ENCODE measurements at regions of chr6 and their contacts with region 1.

Region 1: GRCh38 chr6:118283766-118284165 is 264.3 kb upstream of the PLN start:
- DNase-seq: no peak
- H3K4me3 ChIP-seq: no peak overlapping the region
- H3K27ac ChIP-seq: no peak overlapping the region
- H3K4me1 ChIP-seq: peaks cover 0 to 7% (median 0%) of the 10 kb centered on the region in 3 donors
- H3K27me3 ChIP-seq: no peaks in the 10 kb centered on the region
- CTCF ChIP-seq: peak; percentile 25 to 56 (median 42)
- POLR2A ChIP-seq: no peak

Region 2: DNA sequence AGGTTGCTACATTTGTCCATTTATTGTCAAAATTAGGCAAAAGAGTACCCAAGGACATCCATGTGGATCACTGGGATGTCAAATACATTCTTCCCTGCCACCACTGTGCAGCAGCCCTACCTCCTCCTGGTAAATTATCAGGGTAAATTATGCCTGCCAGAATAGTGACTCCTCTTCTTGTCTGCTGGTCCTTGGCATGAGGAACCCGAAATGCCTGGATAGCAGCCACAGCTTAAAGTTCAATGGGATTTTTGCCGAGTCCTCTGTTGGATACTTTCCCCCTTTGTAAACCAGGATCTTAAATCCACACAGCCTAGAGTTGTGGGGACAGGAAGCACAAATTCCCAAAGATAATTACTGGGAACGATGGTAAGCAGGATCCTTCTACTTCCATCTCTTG is 1233.5 kb before region 1 on chr6:
- intact Hi-C with region 1: no loop called
- DNase-seq: no peak
- H3K4me3 ChIP-seq: no peak overlapping the region
- H3K27ac ChIP-seq: no peak overlapping the region
- H3K4me1 ChIP-seq: no peaks in the 10 kb centered on the region
- H3K27me3 ChIP-seq: no peaks in the 10 kb centered on the region
- CTCF ChIP-seq: no peak
- POLR2A ChIP-seq: no peak

Region 3: GRCh38 chr6:118509009-118509617 is 225.3 kb after region 1 on chr6:
- intact Hi-C with region 1: loop called (anchors 10 kb)
- DNase-seq: no peak
- H3K4me3 ChIP-seq: no peak overlapping the region
- H3K27ac ChIP-seq: no peak overlapping the region
- H3K4me1 ChIP-seq: no peaks in the 10 kb centered on the region
- H3K27me3 ChIP-seq: no peaks in the 10 kb centered on the region
- CTCF ChIP-seq: peak in 4 of 6 experiments; percentile 23 to 46 (median 36)
- POLR2A ChIP-seq: no peak

Region 4: DNA sequence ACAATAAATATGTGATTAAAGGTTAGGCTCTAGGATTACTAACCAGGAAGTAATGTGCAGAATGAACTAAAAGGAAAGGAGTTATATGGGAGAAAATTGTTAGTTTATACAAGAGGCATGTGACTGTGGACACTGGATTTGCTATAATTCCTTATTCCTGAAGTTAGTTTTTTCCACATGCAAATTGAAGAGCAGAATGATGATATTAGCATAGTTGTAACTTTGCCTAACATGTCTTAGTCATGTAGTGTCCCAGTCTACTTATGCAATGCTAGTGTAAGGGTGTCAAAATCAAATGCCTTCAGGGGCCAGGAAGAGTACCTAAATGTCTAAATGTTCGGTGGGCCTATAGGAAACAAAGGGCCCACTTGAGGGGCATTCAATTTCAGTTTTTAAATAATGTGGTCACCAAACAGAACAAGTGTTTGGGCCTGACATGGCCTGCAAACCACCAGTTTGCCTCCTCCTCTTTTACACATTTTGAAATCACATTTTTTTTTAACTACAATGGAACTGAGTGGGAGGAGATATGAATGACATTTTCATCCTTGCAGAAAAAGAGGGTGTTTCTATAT is 395.6 kb after region 1 on chr6:
- intact Hi-C with region 1: no loop called
- DNase-seq: no peak
- H3K4me3 ChIP-seq: no peak overlapping the region
- H3K27ac ChIP-seq: no peak overlapping the region
- H3K4me1 ChIP-seq: peaks cover 0 to 9% (median 0%) of the 10 kb centered on the region in 3 donors
- H3K27me3 ChIP-seq: no peaks in the 10 kb centered on the region
- CTCF ChIP-seq: no peak
- POLR2A ChIP-seq: no peak

Measured in esophagus squamous epithelium (tissue), 5 donors.